PC-9 (cell line): ENCODE measurements at regions of chr19 and their contacts with region 1.

Region 1: DNA sequence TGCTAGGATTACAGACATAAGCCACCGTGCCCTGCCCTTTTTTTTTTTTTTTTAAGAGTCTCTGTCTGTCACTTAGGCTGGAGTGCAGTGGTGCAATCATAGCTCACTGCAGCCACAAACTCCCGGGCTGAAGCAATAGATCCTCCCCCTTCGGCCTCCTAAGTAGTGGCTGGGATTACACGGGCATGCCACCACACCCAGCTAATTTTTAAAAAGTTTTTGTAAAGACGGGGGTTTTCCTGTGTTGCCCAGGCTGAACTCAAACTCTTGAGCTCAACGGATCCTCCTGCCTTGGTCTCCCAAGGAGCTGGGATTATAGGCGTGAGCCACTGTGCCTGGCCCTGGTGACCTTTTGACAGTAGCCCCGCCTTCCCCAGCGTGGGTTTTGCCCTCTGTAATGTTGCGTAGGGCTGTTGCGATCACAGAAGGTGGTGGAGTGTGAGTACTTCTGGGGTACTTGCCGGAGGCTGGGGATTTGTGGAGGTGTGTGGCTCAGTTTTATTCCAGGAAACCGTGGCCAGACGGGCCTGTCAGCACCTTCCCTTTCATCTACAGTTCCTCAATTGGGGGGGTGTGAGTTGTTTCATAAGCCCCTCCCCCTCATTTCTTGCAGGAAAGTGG is 11.6 kb upstream of the RETN start:
- DNase-seq: peak in 1 of 2 experiments; percentile 61
- H3K4me3 ChIP-seq: no peak overlapping the region
- H3K27ac ChIP-seq: no peak overlapping the region
- H3K4me1 ChIP-seq: peaks cover 25% of the 10 kb centered on the region
- H3K27me3 ChIP-seq: peaks cover 17% of the 10 kb centered on the region
- CTCF ChIP-seq: no peak

Region 2: DNA sequence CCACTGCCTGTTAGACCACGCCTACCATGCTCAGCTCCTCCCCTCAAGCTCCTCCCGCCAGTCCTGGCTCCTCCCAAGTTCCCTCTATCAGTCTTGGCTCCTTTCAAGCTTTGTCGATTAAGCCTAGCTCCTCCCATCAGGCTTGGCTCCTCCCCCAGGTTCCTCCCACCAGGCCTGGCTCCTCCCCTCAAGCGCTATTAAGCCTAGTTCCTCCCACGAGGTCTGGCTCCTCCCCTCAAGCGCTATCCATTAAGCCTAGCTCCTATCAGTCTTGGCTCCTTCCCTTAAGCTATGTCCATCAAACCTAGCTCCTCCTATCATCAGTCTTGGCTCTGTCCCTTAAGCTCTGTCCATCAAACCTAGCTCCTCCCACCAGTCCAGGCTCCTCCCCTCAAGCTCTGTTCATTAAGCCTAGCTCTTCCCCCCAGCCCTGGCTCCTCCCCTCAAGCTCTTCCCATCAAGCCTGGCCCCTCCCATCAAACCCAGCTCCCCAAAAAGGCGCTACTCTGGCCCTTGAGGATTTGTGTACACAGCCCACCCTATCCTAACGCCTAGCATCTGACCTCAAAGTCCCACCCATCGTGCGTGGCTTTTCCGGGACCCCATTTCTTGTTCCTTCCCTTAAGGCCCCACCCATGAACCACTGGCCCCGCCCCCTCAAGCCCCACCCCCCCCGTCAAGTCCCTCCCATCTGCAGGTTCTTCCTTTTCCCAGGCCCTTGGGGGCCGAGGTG is 51.6 kb before region 1 on chr19:
- CTCF ChIA-PET with region 1: no interaction called
- POLR2A ChIA-PET with region 1: no interaction called
- intact Hi-C with region 1: no loop called
- DNase-seq: peak; percentile 17 to 79
- H3K4me3 ChIP-seq: no peak overlapping the region
- H3K27ac ChIP-seq: no peak overlapping the region
- H3K4me1 ChIP-seq: no peaks in the 10 kb centered on the region
- H3K27me3 ChIP-seq: no peaks in the 10 kb centered on the region
- CTCF ChIP-seq: no peak

Region 3: DNA sequence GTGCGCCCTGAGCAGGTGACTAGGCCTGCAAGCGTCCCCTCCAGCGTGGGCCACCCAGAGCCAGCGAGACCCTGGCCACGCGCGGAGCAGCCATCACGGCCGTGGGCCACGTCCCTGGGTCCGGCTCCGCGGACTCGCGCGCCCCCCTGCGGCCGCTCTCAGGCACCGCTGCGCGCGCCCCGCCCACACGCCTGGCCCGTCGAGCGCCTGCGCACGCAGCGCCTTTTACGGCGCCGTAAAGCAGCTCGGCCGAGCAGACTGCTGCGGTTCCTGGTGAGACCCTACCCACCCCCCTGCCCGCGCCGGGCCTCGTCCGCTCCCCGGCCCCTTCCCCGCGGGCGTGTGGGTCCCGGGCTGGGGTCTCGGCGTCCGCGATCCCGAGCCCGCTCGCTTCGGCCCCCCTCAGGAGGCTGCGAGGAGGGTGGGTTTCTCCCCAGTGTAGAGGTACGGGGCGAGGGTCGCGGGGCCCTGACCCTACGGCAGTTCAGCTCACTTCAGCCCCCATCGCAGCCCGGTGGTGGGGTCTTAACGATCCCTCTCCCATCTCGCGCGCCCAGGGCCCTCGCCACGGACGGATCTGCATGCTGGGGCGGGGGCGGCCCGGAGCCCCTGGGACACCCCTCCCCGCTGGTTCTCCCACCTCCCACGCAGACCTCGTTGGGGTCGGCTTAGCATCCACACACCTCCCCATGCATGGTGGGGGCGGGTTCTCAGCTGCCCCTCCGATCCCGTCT is 23.5 kb after region 1 on chr19 and contains the start of gene TRAPPC5:
- CTCF ChIA-PET with region 1: interaction called, 14 read pairs
- POLR2A ChIA-PET with region 1: no interaction called
- intact Hi-C with region 1: no loop called
- DNase-seq: peak; percentile 65 to 82
- H3K4me3 ChIP-seq: peak within 1 kb of the TSS; percentile 91
- H3K27ac ChIP-seq: peak within 1 kb of the TSS; percentile 32; the same call in 1 of the 2 replicates
- H3K4me1 ChIP-seq: peaks cover 21% of the 10 kb centered on the region
- H3K27me3 ChIP-seq: peaks cover 24% of the 10 kb centered on the region
- CTCF ChIP-seq: peak; percentile 89
- total RNA-seq, gene TRAPPC5: 81.2 and 103 TPM in 2 replicates